ENCODE measurements at regions of chr14 and their contacts with region 1.

Region 1: DNA sequence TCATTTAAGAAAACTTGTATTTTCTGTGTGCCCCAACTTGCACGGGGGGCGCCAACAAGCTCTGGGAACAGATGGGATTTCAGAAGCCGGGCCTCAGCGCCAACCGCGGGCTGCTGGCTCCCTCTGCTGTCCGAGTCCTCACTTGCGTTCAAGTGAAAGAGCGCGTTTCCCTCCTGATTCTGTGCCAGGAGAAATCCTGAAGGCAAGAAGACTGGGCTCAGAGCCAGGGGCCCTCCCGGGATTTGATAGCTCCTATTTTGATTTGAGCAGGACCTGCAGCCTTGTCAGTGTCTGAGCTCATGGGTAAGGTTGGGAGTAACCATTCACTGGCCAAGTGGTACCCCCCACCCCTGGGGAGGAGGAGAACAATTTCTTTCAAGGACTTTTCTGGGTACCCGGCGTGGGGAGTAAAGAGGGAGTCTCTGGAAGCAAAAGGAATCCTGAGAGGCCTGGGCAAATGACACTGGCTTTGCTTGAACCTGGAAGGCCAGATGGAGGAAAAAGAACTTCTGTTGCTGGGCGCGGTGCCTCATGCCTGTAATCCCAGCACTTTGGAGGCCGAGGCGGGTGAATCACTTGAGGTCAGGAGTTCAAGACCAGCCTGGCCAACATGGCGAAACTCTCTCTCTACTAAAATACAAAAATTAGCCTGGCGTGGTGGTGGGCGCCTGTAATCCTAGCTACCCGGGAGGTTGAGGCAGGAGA is 179.0 kb upstream of the RGS6 start:
- DNase-seq: peak; percentile 92
- H3K4me3 ChIP-seq: no peak overlapping the region
- H3K27ac ChIP-seq: no peak overlapping the region
- H3K4me1 ChIP-seq: no peaks in the 10 kb centered on the region
- H3K27me3 ChIP-seq: no peaks in the 10 kb centered on the region
- CTCF ChIP-seq: peak; percentile 82

Region 2: DNA sequence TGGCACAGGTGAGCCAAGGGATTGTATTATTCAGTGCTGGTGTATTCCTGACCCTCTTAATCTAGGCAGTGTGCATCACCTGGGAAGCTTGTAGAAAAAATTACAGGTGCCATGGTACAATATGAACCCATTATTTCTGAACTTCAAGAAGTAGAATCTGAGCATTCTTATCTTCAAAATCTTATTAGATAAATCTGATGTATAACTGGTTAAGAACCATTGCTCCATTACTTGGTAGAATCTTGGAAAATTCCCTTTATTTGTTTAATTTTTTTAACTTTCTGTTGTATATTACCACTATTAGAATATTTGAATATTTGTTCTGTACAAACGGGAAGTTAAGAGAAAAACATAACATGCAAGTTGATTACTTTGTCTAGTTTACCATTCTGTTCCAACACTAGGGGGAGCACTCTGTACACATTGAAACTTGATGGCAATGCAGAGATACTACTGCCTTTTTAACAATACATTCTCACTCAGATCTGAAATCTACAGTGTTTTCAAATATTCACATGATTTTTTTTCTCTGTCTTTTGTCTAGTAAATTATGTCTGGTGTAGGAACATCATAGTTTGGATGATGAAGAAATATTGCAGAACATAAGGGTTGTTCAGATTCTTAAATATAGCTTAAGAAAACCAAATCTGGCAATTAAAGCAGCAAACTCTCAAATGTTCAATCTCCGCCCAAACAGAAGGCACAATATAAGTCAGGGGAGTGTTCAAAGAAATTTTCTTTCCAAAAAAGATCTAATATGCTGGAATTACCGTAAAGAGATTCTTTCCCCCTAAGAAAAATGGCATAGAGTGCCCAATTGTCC is 649.4 kb before region 1 on chr14:
- intact Hi-C with region 1: loop called (anchors 5 kb)
- DNase-seq: no peak
- H3K4me3 ChIP-seq: no peak overlapping the region
- H3K27ac ChIP-seq: no peak overlapping the region
- H3K4me1 ChIP-seq: no peaks in the 10 kb centered on the region
- H3K27me3 ChIP-seq: no peaks in the 10 kb centered on the region
- CTCF ChIP-seq: peak; percentile 72

Region 3: GRCh38 chr14:71138448-71139293 is 614.6 kb before region 1 on chr14:
- intact Hi-C with region 1: loop called (anchors 2 kb)
- DNase-seq: peak; percentile 60
- H3K4me3 ChIP-seq: no peak overlapping the region
- H3K27ac ChIP-seq: no peak overlapping the region
- H3K4me1 ChIP-seq: no peaks in the 10 kb centered on the region
- H3K27me3 ChIP-seq: no peaks in the 10 kb centered on the region
- CTCF ChIP-seq: peak; percentile 93

Measured in colonic mucosa (tissue), 4 donors.